Esophagus muscularis mucosa (tissue), 4 donors: ENCODE measurements at regions of chr6 and their contacts with region 1.

Region 1: GRCh38 chr6:38262026-38262425 is 377.7 kb downstream of the BTBD9 start:
- DNase-seq: no peak
- H3K4me3 ChIP-seq: no peak overlapping the region
- H3K27ac ChIP-seq: peak overlapping the region in 1 of 4 donors; percentile 39
- H3K4me1 ChIP-seq: peaks cover 10 to 20% (median 14%) of the 10 kb centered on the region in 4 donors
- H3K27me3 ChIP-seq: no peaks in the 10 kb centered on the region
- CTCF ChIP-seq: no peak
- EP300 ChIP-seq: no peak
- POLR2A ChIP-seq: no peak

Region 2: GRCh38 chr6:38215225-38215624 is 46.8 kb before region 1 on chr6:
- intact Hi-C with region 1: loop called (anchors 5 kb)
- DNase-seq: peak; percentile 70
- H3K4me3 ChIP-seq: no peak overlapping the region
- H3K27ac ChIP-seq: no peak overlapping the region
- H3K4me1 ChIP-seq: peaks cover 19 to 33% (median 32%) of the 10 kb centered on the region in 4 donors
- H3K27me3 ChIP-seq: no peaks in the 10 kb centered on the region
- CTCF ChIP-seq: no peak
- EP300 ChIP-seq: no peak
- POLR2A ChIP-seq: no peak

Region 3: GRCh38 chr6:38522322-38522721 is 260.3 kb after region 1 on chr6:
- intact Hi-C with region 1: no loop called
- DNase-seq: no peak
- H3K4me3 ChIP-seq: no peak overlapping the region
- H3K27ac ChIP-seq: no peak overlapping the region
- H3K4me1 ChIP-seq: peaks cover 0 to 18% (median 15%) of the 10 kb centered on the region in 4 donors
- H3K27me3 ChIP-seq: no peaks in the 10 kb centered on the region
- CTCF ChIP-seq: no peak
- EP300 ChIP-seq: no peak
- POLR2A ChIP-seq: no peak

Region 4: GRCh38 chr6:38579010-38579628 is 317.1 kb after region 1 on chr6:
- intact Hi-C with region 1: no loop called
- DNase-seq: no peak
- H3K4me3 ChIP-seq: no peak overlapping the region
- H3K27ac ChIP-seq: no peak overlapping the region
- H3K4me1 ChIP-seq: no peaks in the 10 kb centered on the region
- H3K27me3 ChIP-seq: no peaks in the 10 kb centered on the region
- CTCF ChIP-seq: no peak
- EP300 ChIP-seq: no peak
- POLR2A ChIP-seq: no peak